ENCODE measurements at regions of chr19 and their contacts with region 1.

Region 1: DNA sequence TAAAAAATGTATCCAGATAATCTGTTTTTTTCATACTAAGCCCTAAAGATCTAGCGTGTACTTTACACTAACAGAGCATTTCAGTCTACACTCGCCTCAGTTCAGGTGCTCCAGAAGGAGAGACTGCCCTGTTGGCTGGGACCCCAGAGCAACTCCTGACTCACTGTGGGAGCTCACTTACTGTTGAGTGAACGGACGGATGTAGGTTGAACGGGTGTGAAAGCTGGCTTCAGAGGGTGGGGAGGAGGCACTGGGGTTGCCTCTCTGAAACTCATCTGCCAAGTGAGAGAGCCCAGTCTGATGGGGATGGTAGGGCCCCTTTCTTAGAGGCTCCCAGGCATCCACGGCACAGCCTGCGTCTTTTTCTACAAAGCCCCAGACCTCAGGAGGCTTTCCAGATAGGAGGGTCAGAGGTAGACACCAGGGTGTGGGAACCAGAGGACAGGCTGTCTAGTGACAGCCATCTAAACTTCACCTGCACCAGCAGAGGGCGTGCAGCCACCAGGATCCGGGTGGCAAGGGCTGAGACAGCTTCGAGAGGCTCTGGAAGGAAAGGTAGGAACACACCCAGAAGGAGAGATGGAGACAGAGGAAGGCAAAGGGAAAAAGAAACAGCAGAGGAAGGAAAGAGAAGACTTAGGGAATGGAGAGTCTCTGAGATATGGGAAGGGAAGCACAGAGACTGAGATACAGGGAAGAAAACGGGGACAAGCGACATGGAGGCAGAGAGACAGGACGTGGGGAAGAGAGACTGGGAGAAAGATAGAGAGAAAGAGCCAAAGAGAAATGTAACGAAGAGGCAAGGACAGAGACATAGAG is 3.7 kb downstream of the KASH5 start:
- DNase-seq: peak; percentile 60
- ATAC-seq: peak; percentile 98
- H3K4me3 ChIP-seq: no peak overlapping the region
- H3K27ac ChIP-seq: no peak overlapping the region
- H3K4me1 ChIP-seq: peaks cover 3 to 10% of the 10 kb centered on the region in 2 experiments; a peak in 3 of 4 replicates
- H3K27me3 ChIP-seq: no peaks in the 10 kb centered on the region
- CTCF ChIP-seq: peak; percentile 91 to 97 (median 93)
- POLR2A ChIP-seq: no peak
- RAD21 ChIP-seq: peak; percentile 98

Region 2: GRCh38 chr19:49425922-49426592 is 34.3 kb after region 1 on chr19:
- CTCF ChIA-PET with region 1: interaction called, 12 read pairs
- POLR2A ChIA-PET with region 1: no interaction called
- RAD21 ChIA-PET with region 1: no interaction called
- intact Hi-C with region 1: no loop called
- DNase-seq: peak; percentile 73
- ATAC-seq: peak; percentile 75
- H3K4me3 ChIP-seq: peak overlapping the region; percentile 46 to 61
- H3K27ac ChIP-seq: peak overlapping the region; percentile 12
- H3K4me1 ChIP-seq: peaks cover 12 to 38% of the 10 kb centered on the region in 2 experiments; a peak in 3 of 4 replicates
- H3K27me3 ChIP-seq: peaks cover 9% of the 10 kb centered on the region; the same call in 1 of the 2 replicates
- CTCF ChIP-seq: no peak
- POLR2A ChIP-seq: no peak
- RAD21 ChIP-seq: no peak